HCT116 (cell line): ENCODE measurements at regions of chr17 and their contacts with region 1.

Region 1: GRCh38 chr17:47949136-47949759 is 7.9 kb downstream of the PNPO start:
- DNase-seq: peak; percentile 67
- ATAC-seq: peak; percentile 81
- H3K4me3 ChIP-seq: peak overlapping the region; percentile 29 to 40
- H3K27ac ChIP-seq: peak overlapping the region; percentile 67
- H3K4me1 ChIP-seq: peaks cover 30 to 51% of the 10 kb centered on the region in 2 experiments
- H3K27me3 ChIP-seq: no peaks in the 10 kb centered on the region
- CTCF ChIP-seq: peak; percentile 96 to 99 (median 98)
- POLR2A ChIP-seq: no peak
- RAD21 ChIP-seq: peak; percentile 97

Region 2: GRCh38 chr17:47929218-47930000 is 19.8 kb before region 1 on chr17:
- CTCF ChIA-PET with region 1: interaction called, 15 read pairs
- POLR2A ChIA-PET with region 1: no interaction called
- RAD21 ChIA-PET with region 1: no interaction called
- intact Hi-C with region 1: no loop called
- DNase-seq: no peak
- ATAC-seq: no peak
- H3K4me3 ChIP-seq: no peak overlapping the region
- H3K27ac ChIP-seq: no peak overlapping the region
- H3K4me1 ChIP-seq: peaks cover 12 to 24% of the 10 kb centered on the region in 2 experiments
- H3K27me3 ChIP-seq: no peaks in the 10 kb centered on the region
- CTCF ChIP-seq: no peak
- POLR2A ChIP-seq: no peak
- RAD21 ChIP-seq: no peak

Region 3: GRCh38 chr17:47935961-47936360 is 13.3 kb before region 1 on chr17:
- CTCF ChIA-PET with region 1: interaction called, 41 read pairs
- POLR2A ChIA-PET with region 1: interaction called, 6 read pairs
- RAD21 ChIA-PET with region 1: interaction called in 1 of 2 experiments, 8 read pairs
- intact Hi-C with region 1: no loop called
- DNase-seq: peak; percentile 92
- ATAC-seq: peak; percentile 88
- H3K4me3 ChIP-seq: peak overlapping the region in 1 of 2 experiments; percentile 36; a peak in 3 of 4 replicates
- H3K27ac ChIP-seq: peak overlapping the region; percentile 61
- H3K4me1 ChIP-seq: peaks cover 41 to 69% of the 10 kb centered on the region in 2 experiments
- H3K27me3 ChIP-seq: no peaks in the 10 kb centered on the region
- CTCF ChIP-seq: no peak
- POLR2A ChIP-seq: no peak
- RAD21 ChIP-seq: no peak

Region 4: GRCh38 chr17:48002266-48002915 is 53.1 kb after region 1 on chr17:
- CTCF ChIA-PET with region 1: interaction called, 11 read pairs
- POLR2A ChIA-PET with region 1: no interaction called
- RAD21 ChIA-PET with region 1: no interaction called
- intact Hi-C with region 1: no loop called
- DNase-seq: no peak
- ATAC-seq: peak; percentile 54
- H3K4me3 ChIP-seq: no peak overlapping the region
- H3K27ac ChIP-seq: peak overlapping the region; percentile 20; the same call in 1 of the 2 replicates
- H3K4me1 ChIP-seq: peaks cover 16 to 41% of the 10 kb centered on the region in 2 experiments
- H3K27me3 ChIP-seq: no peaks in the 10 kb centered on the region
- CTCF ChIP-seq: no peak
- POLR2A ChIP-seq: no peak
- RAD21 ChIP-seq: no peak

Region 5: GRCh38 chr17:48011405-48012150 is 62.3 kb after region 1 on chr17:
- CTCF ChIA-PET with region 1: interaction called, 83 read pairs
- POLR2A ChIA-PET with region 1: interaction called, 3 read pairs
- RAD21 ChIA-PET with region 1: no interaction called
- intact Hi-C with region 1: no loop called
- DNase-seq: peak; percentile 35
- ATAC-seq: peak; percentile 89
- H3K4me3 ChIP-seq: peak overlapping the region in 1 of 2 experiments; percentile 44; a peak in 2 of 4 replicates
- H3K27ac ChIP-seq: no peak overlapping the region
- H3K4me1 ChIP-seq: peaks cover 5 to 17% of the 10 kb centered on the region in 2 experiments; a peak in 3 of 4 replicates
- H3K27me3 ChIP-seq: no peaks in the 10 kb centered on the region
- CTCF ChIP-seq: peak; percentile 53 to 89 (median 86); a peak in 5 of 6 replicates
- POLR2A ChIP-seq: no peak
- RAD21 ChIP-seq: peak; percentile 69